ENCODE measurements at regions of chr14 and their contacts with region 1.

Region 1: DNA sequence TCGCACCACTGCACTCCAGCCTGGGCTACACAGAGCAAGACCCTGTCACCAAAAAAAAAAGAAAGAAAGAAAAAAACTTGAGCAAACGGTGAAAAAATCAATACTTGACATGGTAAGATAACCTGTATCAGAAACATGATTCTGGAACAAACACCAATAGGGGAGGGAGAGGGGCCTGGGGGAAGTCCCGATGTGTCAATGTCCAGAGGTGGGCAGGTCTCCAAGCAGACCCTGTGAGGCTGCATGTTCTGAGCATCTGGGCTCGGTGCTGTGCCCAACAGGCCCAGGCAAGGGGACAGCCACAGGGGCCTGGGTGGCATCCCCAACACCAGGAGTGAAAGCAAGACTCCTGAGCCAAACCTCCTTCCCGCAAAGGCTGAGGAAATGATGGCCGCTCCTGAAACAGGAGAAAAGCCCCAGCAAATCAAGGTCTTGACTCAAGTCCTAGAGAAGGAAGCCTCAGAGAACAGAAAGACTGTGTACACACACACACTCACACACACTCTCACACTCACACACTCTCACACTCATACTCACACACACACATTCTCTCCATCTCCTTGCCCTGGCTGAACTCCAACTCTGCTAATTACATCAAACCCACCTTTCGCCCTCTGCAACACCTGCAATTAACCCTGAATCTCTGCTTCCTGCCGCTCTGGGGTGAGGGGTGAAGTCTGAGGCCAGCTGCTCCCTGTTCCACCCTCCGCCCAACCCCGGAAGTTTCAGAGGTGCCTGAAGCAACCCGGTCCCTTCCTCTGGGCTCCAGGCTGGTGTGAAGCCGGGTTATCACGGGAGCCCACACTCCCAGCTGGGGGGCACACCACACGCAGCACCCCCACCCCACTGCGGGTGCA is 20.4 kb downstream of the CCDC88C start:
- DNase-seq: peak in 4 of 5 donors; percentile 52 to 77 (median 70)
- H3K4me3 ChIP-seq: peak overlapping the region; percentile 44
- H3K4me3 Mint-ChIP-seq: peak overlapping the region; percentile 88 to 100 (median 99)
- H3K27ac ChIP-seq: peak overlapping the region; percentile 43
- H3K27ac Mint-ChIP-seq: peak overlapping the region; percentile 91 to 100 (median 96)
- H3K4me1 ChIP-seq: peaks cover 95% of the 10 kb centered on the region
- H3K4me1 Mint-ChIP-seq: peaks cover 86 to 99% (median 97%) of the 10 kb centered on the region in 3 donors
- H3K27me3 ChIP-seq: no peaks in the 10 kb centered on the region
- H3K27me3 Mint-ChIP-seq: peaks cover 0 to 1% of the 10 kb centered on the region in 2 donors

Region 2: DNA sequence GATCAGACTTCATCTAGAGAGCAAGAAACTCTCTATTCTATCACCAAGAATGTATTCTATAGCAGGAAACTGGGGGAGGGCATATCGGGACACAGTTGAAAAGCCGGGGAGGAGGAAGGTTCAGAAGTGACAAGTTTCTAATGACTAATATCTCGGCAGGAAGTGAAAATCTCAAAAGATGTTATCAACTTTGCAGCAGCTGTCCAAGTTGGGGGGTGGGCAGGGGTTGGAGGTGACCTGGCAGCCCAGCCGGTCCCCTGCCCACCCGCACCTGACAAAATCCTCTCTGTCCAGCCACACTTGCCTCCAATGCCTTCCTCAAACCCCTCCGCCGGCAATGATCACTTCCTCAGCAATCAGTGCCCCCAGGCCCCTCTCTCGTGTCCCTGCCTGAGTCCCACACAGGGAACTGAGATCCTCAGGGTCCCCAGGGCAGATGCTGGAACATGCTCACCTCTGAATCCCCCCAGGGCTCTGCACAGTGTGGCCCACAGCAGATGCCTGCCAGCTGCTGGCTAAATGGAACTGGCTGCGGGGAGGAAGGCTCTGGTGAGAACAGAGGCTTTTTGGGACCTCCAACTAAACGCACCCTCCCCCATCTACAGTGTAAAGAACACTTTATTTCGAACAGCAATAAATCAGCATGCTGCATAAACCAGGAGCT is 23.5 kb before region 1 on chr14:
- CTCF ChIA-PET with region 1: interaction called, 25 read pairs
- POLR2A ChIA-PET with region 1: interaction called, 8 read pairs
- DNase-seq: peak in 4 of 5 donors; percentile 37 to 68 (median 51)
- H3K4me3 ChIP-seq: peak overlapping the region; percentile 68
- H3K4me3 Mint-ChIP-seq: peak overlapping the region; percentile 71 to 90 (median 85)
- H3K27ac ChIP-seq: peak overlapping the region; percentile 63
- H3K27ac Mint-ChIP-seq: peak overlapping the region; percentile 84 to 99 (median 95)
- H3K4me1 ChIP-seq: peaks cover 99% of the 10 kb centered on the region
- H3K4me1 Mint-ChIP-seq: peaks cover 94 to 100% (median 100%) of the 10 kb centered on the region in 3 donors
- H3K27me3 ChIP-seq: no peaks in the 10 kb centered on the region
- H3K27me3 Mint-ChIP-seq: no peaks in the 10 kb centered on the region

Region 3: DNA sequence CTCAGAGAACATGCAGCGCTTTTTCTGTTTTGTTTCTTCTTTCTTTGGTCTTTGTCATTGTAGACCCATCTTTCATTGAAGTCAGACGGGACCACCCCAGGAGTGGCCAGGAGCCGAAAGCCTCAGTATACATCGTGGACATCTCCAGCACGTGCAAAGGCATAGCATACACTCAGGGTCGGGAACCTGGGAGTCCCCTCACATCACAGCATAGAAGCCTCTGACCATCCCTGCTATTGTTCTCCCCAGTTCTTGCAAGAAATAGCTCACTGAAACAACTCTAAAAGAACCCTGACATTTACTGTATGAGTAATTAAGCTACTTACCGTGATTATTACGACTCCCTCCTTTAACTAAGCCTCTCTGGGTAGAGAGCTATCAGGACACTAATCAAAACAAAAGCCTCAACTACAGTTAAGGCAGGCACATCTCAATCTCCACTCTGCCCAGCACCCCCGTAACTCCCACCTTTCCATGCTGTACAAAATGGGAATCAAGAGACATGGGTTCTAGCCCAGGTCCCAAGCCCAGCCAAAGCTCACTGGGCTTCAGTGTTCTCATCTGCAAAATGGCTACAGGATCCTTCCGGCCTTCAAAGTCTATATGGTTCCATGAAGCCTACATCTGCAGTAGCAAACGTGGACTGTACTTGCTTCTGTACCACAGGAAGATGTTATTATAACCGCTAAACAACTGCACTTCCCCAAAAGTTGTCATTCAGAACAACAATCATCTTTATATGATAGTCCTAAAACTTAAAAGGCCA is 13.8 kb after region 1 on chr14:
- CTCF ChIA-PET with region 1: interaction called, 211 read pairs
- POLR2A ChIA-PET with region 1: interaction called, 58 read pairs
- DNase-seq: peak in 1 of 5 donors; percentile 20
- H3K4me3 ChIP-seq: peak overlapping the region; percentile 46
- H3K4me3 Mint-ChIP-seq: peak overlapping the region; percentile 78 to 93 (median 83)
- H3K27ac ChIP-seq: peak overlapping the region; percentile 55
- H3K27ac Mint-ChIP-seq: peak overlapping the region; percentile 92 to 100 (median 96)
- H3K4me1 ChIP-seq: peaks cover 91% of the 10 kb centered on the region
- H3K4me1 Mint-ChIP-seq: peaks cover 84 to 97% (median 96%) of the 10 kb centered on the region in 3 donors
- H3K27me3 ChIP-seq: no peaks in the 10 kb centered on the region
- H3K27me3 Mint-ChIP-seq: no peaks in the 10 kb centered on the region